Activated CD8-positive, alpha-beta T cell treated with anti-CD3 and anti-CD28 coated beads, Interleukin-2, amount 10 ng/mL, durations not matched to agents 7 days and 5 days (primary cell): ENCODE measurements at regions of chr3 and their contacts with region 1.

Region 1: DNA sequence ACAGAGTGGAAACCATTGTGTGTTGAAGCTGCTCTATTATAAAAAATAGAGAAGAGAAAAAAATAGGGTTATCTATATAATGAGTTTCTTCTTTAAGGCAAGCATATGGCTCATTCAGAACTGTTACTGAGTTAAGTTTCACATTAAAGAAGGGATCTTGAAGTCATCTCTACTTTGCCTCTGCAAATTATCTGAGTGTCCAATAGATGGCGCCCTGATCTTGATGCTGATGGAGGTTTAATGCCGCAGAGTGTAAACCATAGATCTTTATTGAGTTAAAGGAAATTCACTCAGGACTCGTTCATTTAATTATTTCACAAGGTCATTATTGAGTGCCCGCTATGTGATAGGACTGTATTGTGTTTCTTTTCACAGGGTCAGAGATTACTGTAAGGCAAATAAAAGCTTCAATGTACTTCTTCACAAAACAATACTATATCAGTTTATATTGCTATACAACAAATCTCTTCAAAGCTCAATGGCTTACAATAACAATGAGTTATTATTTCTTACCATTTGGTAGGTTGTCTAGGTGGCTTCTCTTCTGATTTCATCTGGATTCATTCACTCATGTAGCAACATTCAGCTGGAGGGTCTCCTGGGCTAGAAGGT is 171.4 kb downstream of the NSUN3 start:
- DNase-seq: peak; percentile 32
- ATAC-seq: no peak
- H3K4me3 Mint-ChIP-seq: no peak overlapping the region
- H3K27ac Mint-ChIP-seq: no peak overlapping the region
- H3K4me1 Mint-ChIP-seq: peaks cover 2% of the 10 kb centered on the region
- H3K27me3 Mint-ChIP-seq: no peaks in the 10 kb centered on the region

Region 2: DNA sequence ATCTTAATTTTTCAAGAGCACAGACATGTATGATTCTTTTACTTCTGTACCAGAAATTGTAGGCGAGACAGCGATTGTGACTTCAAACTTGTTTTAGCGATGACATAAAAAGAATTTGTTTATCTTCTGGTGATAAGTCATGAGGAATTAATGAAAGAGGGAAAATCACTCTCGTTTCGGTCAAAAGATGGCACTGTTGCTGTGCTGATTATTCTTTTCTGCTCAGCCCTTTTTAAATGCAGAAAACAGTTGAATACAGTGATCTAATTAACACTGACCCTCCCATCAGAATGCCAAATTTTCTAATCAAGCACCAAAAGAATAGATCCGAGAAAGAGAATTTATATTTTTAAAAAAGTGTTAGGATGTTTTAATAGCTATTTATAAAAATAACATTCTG is 118.8 kb before region 1 on chr3:
- CTCF ChIA-PET with region 1: no interaction called
- POLR2A ChIA-PET with region 1: no interaction called
- DNase-seq: no peak
- ATAC-seq: no peak
- H3K4me3 Mint-ChIP-seq: no peak overlapping the region
- H3K27ac Mint-ChIP-seq: no peak overlapping the region
- H3K4me1 Mint-ChIP-seq: peaks cover 3% of the 10 kb centered on the region
- H3K27me3 Mint-ChIP-seq: no peaks in the 10 kb centered on the region

Region 3: GRCh38 chr3:94249585-94249984 is 15.3 kb after region 1 on chr3:
- CTCF ChIA-PET with region 1: interaction called, 17 read pairs
- POLR2A ChIA-PET with region 1: no interaction called
- DNase-seq: peak; percentile 73
- ATAC-seq: no peak
- H3K4me3 Mint-ChIP-seq: no peak overlapping the region
- H3K27ac Mint-ChIP-seq: no peak overlapping the region
- H3K4me1 Mint-ChIP-seq: no peaks in the 10 kb centered on the region
- H3K27me3 Mint-ChIP-seq: no peaks in the 10 kb centered on the region